PC-9 (cell line): ENCODE measurements at regions of chr15 and their contacts with region 1.

Region 1: DNA sequence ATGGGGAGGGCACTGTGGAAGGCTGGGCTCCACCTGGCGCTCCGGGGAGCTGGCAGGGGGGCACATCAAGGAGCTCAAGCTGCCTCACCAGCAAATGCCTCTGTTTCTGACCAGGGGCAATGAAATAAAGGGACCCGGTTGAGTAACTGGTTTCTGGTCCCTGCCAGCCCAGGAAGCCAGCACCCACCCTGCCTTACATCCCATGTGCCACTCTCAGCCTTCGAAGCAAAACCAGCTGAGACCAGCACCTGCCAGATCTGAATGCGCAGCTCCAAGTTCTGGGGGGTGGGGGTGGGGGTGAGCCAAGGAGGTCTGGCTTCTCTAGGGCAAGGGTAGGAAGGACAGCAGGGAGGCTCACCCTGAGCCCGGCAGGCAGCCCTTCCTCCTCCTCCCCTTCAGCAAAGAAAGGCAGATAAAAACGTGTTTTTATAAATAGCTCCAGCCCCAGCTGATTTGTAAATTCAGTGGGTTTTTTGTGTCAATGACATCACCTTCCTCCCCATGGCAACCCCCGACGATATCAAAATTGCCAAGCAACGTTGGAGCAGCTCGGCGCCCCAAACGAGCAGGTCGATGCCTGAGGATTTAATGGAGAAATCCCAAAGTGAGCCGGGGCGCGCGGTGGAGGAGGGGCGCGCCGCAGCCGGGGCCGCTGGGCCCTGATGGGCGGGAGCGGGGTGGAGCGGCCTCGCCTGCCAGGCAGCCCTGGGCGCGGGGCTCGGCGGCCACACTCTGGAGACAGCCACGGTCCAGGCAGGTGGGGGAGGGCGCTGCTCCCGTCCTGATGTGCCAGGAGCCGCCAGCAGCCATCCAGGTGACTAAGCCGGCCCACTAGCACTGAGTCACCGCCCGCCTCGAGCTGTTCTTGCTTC is at the start of gene PAK6:
- DNase-seq: peak; percentile 77 to 94
- H3K4me3 ChIP-seq: peak within 1 kb of the TSS; percentile 48; the same call in 1 of the 2 replicates
- H3K27ac ChIP-seq: 0 out of 2 replicates have a peak within 1 kb of the TSS, but pooled peaks have one; percentile 19
- H3K4me1 ChIP-seq: peaks cover 51% of the 10 kb centered on the region
- H3K27me3 ChIP-seq: no peaks in the 10 kb centered on the region
- CTCF ChIP-seq: no peak
- total RNA-seq, gene PAK6: 10.7 and 11.7 TPM in 2 replicates

Region 2: DNA sequence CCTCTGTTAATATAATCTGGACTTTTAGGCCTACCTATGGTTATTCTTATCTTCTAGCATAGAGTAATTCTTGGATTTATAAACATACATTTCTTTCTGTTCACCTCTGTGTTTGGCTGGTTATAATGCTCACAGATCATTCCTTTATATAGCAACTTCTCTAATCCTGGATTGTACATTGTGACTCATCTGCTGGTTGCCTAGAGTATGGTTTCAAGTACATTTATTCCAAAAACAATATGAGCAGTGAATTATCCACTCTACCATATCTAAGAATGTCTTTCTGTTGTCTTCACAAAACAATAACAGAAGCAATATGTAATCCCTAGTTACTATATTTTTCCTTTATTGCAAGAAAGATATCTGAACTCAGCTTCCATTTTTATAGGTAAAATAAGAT is 491.4 kb before region 1 on chr15:
- CTCF ChIA-PET with region 1: no interaction called
- POLR2A ChIA-PET with region 1: no interaction called
- intact Hi-C with region 1: no loop called
- DNase-seq: peak in 1 of 2 experiments; percentile 35
- H3K4me3 ChIP-seq: no peak overlapping the region
- H3K27ac ChIP-seq: no peak overlapping the region
- H3K4me1 ChIP-seq: peaks cover 33% of the 10 kb centered on the region
- H3K27me3 ChIP-seq: no peaks in the 10 kb centered on the region
- CTCF ChIP-seq: no peak

Region 3: DNA sequence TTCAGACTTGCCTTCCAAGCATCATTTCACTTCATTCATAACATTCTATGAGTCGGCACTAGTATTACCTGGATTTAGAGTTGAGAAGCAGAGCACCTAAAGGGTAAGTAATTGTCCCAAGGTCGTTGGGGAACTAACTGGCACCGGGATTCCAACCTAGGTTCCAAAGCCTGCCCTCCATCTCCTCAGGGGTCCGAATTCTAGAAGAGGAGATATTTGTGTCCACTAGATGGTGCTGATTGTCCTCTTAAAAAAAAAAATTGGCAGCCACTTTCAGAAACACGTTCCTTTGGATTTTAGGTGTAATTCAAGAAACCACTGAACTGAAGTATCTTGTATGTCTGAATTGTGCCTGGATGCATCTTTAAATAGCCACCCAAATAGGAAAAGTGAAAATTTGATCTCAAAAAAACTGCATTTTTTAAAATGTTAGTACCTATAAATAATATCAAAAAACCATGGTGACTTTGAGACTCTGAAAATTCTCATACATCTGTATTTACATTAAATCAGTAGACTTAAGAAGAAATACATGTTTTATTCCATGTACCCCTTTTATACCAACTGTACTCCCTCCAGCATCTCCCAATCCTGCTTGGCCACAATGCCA is 452.2 kb before region 1 on chr15:
- CTCF ChIA-PET with region 1: no interaction called
- POLR2A ChIA-PET with region 1: no interaction called
- intact Hi-C with region 1: no loop called
- DNase-seq: no peak
- H3K4me3 ChIP-seq: no peak overlapping the region
- H3K27ac ChIP-seq: no peak overlapping the region
- H3K4me1 ChIP-seq: peaks cover 13% of the 10 kb centered on the region
- H3K27me3 ChIP-seq: no peaks in the 10 kb centered on the region
- CTCF ChIP-seq: peak; percentile 68

Region 4: GRCh38 chr15:40266828-40267304 is 28.1 kb after region 1 on chr15:
- CTCF ChIA-PET with region 1: interaction called, 7 read pairs
- POLR2A ChIA-PET with region 1: no interaction called
- intact Hi-C with region 1: loop called (anchors 2 kb)
- DNase-seq: peak; percentile 87 to 90
- H3K4me3 ChIP-seq: no peak overlapping the region
- H3K27ac ChIP-seq: peak overlapping the region; percentile 54
- H3K4me1 ChIP-seq: peaks cover 17% of the 10 kb centered on the region
- H3K27me3 ChIP-seq: no peaks in the 10 kb centered on the region
- CTCF ChIP-seq: no peak

Region 5: GRCh38 chr15:40405501-40406381 is 167.0 kb after region 1 on chr15 and contains the start of gene IVD:
- CTCF ChIA-PET with region 1: no interaction called
- POLR2A ChIA-PET with region 1: interaction called, 13 read pairs
- intact Hi-C with region 1: no loop called
- DNase-seq: peak; percentile 85 to 96
- H3K4me3 ChIP-seq: peak within 1 kb of the TSS; percentile 96
- H3K27ac ChIP-seq: peak within 1 kb of the TSS; percentile 80
- H3K4me1 ChIP-seq: peaks cover 19% of the 10 kb centered on the region
- H3K27me3 ChIP-seq: no peaks in the 10 kb centered on the region
- CTCF ChIP-seq: no peak
- total RNA-seq, gene IVD: 82.5 and 83.7 TPM in 2 replicates